IMR-90 (cell line): ENCODE measurements at regions of chr3 and their contacts with region 1.

Region 1: GRCh38 chr3:132416807-132417694 is at the start of gene DNAJC13:
- DNase-seq: peak; percentile 93
- ATAC-seq: peak; percentile 91
- H3K4me3 ChIP-seq: peak within 1 kb of the TSS; percentile 89
- H3K27ac ChIP-seq: peak within 1 kb of the TSS; percentile 92
- H3K4me1 ChIP-seq: no peaks in the 10 kb centered on the region; the same call in none of the 2 replicates
- H3K27me3 ChIP-seq: no peaks in the 10 kb centered on the region
- CTCF ChIP-seq: no peak
- POLR2A ChIP-seq: peak; percentile 76
- RAD21 ChIP-seq: no peak; the same call in 1 of the 2 replicates
- total RNA-seq, gene DNAJC13: 48.6 and 67.8 TPM in 2 replicates

Region 2: DNA sequence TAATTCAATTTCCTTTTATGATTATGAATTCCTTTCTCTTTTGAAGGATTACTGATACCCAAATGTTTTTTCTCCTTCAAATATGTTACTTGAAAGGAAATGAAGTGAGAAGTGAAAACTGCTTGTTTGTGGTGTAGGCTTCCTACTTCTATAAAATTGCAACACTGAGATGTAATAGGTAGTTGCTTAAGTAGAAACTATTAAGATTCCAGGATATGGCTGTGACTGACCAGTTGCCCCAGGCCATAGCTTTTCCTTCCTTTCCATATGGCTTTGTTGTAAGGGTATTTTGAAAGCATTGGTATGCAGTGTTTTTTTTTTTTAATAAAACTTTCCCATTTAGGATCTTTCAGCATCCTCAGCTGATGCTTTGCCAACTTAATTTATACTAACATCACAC is 28.8 kb after region 1 on chr3:
- CTCF ChIA-PET with region 1: interaction called, 4 read pairs
- POLR2A ChIA-PET with region 1: interaction called, 4 read pairs
- dilution Hi-C with region 1: no loop called
- in situ Hi-C with region 1: no loop called
- intact Hi-C with region 1: loop called (anchors 5 kb)
- DNase-seq: peak; percentile 61
- ATAC-seq: peak; percentile 35
- H3K4me3 ChIP-seq: no peak overlapping the region
- H3K27ac ChIP-seq: peak overlapping the region; percentile 5; the same call in 1 of the 2 replicates
- H3K4me1 ChIP-seq: peaks cover 14% of the 10 kb centered on the region
- H3K27me3 ChIP-seq: no peaks in the 10 kb centered on the region
- CTCF ChIP-seq: no peak
- POLR2A ChIP-seq: no peak
- RAD21 ChIP-seq: no peak

Region 3: GRCh38 chr3:132669256-132669777 is 252.3 kb after region 1 on chr3:
- CTCF ChIA-PET with region 1: no interaction called
- POLR2A ChIA-PET with region 1: interaction called, 12 read pairs
- dilution Hi-C with region 1: no loop called
- in situ Hi-C with region 1: no loop called
- intact Hi-C with region 1: no loop called
- DNase-seq: peak; percentile 13
- ATAC-seq: peak; percentile 28
- H3K4me3 ChIP-seq: no peak overlapping the region
- H3K27ac ChIP-seq: peak overlapping the region; percentile 40; the same call in 1 of the 2 replicates
- H3K4me1 ChIP-seq: peaks cover 4% of the 10 kb centered on the region
- H3K27me3 ChIP-seq: no peaks in the 10 kb centered on the region
- CTCF ChIP-seq: no peak
- POLR2A ChIP-seq: no peak
- RAD21 ChIP-seq: no peak